ENCODE measurements at regions of chr20 and their contacts with region 1.

Region 1: DNA sequence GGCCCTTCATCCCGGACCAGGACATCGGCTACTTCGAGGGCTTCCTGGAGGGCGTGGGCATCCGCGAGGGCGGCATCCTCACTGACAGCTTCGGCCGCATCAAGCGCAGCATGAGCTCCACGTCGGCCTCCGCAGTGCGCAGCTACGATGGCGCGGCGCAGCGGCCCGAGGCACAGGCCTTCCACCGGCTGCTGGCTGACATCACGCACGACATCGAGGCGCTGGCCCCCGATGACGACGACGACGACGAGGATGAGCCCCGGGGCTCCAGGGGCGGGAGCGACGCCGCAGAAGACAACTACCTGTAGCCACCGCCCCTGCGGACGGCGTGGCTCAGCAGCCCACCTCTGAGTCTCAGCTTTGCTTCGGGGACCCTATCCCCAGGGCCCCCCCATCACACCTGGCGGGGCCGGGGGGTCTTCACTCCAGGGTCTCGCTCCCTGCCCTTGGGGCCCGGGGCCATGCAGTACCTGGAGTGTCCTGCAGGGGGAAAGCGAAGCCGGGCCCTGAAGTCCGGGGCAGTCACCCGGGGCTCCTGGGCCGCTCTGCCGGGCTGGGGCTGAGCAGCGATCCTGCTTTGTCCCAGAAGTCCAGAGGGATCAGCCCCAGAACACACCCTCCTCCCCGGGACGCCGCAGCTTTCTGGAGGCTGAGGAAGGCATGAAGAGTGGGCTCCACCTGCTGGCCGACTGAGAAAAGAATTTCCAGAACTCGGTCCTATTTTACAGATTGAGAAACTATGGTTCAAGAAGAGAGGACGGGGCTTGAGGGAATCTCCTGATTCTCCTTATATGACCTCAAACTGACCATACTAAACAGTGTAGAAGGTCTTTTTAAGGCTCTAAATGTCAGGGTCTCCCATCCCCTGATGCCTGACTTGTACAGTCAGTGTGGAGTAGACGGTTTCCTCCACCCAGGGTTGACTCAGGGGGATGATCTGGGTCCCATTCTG is 20.8 kb upstream of the HCK start:
- DNase-seq: peak; percentile 86 to 89
- ATAC-seq: peak; percentile 90 to 99
- H3K4me3 ChIP-seq: peak overlapping the region; percentile 24
- H3K27ac ChIP-seq: peak overlapping the region in 1 of 2 experiments; percentile 64; a peak in 4 of 6 replicates
- H3K4me1 ChIP-seq: no peaks in the 10 kb centered on the region; the same call in 1 of the 3 replicates
- CTCF ChIP-seq: peak; percentile 99
- EP300 ChIP-seq: no peak
- POLR2A ChIP-seq: no peak
- RAD21 ChIP-seq: peak; percentile 88 to 90

Region 2: GRCh38 chr20:31822421-31823330 is 208.6 kb before region 1 on chr20:
- CTCF ChIA-PET with region 1: interaction called, 117 read pairs
- POLR2A ChIA-PET with region 1: no interaction called
- DNase-seq: peak; percentile 62 to 79
- ATAC-seq: peak; percentile 71 to 90
- H3K4me3 ChIP-seq: 0 out of 3 replicates have a peak overlapping the region, but pooled peaks have one; percentile 18
- H3K27ac ChIP-seq: peak overlapping the region; percentile 16 to 68; a peak in 4 of 6 replicates
- H3K4me1 ChIP-seq: peaks cover 23% of the 10 kb centered on the region; the same call in 2 of the 3 replicates
- CTCF ChIP-seq: peak; percentile 97
- EP300 ChIP-seq: no peak
- POLR2A ChIP-seq: no peak
- RAD21 ChIP-seq: peak; percentile 97 to 99

Region 3: DNA sequence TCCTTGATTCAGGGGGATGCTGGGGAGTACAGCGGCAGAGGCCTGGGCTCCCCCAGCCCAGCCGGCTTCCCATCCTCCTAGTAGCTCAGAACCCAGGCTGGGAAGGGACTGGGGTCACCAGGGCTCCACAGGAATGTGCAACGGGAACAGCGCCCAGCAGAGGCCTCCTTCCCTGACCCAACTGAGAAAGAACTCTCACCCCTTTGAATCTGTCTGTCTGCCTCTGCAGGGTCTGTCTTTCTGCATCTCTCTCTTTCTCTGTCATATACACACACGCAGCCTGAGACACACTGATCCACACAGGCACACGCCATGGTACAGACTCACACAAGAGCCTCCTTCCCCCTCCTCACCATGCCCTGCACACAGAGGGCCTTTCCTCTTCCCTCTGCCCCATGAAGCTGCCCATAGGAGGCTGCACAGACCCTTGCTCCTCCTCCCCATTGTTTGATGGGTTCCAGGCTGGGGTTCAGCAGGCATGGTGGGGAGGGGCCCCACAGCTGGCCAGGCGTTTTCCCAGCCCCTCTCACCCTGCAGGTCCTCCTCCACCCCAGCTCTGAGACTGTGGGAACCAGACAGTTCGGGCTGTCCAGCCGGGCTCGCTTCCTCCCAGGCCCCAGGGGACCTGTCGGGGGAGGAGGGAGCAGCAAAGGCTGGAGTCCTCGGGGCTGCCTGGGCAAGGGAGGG is 188.7 kb before region 1 on chr20:
- CTCF ChIA-PET with region 1: interaction called, 21 read pairs
- POLR2A ChIA-PET with region 1: no interaction called
- DNase-seq: peak in 1 of 2 experiments; percentile 45
- ATAC-seq: peak; percentile 22 to 44; a peak in 4 of 6 replicates
- H3K4me3 ChIP-seq: no peak overlapping the region
- H3K27ac ChIP-seq: peak overlapping the region; percentile 85 to 86
- H3K4me1 ChIP-seq: peaks cover 84% of the 10 kb centered on the region
- CTCF ChIP-seq: no peak
- EP300 ChIP-seq: no peak
- POLR2A ChIP-seq: no peak
- RAD21 ChIP-seq: no peak

Region 4: GRCh38 chr20:31879143-31879987 is 151.9 kb before region 1 on chr20:
- CTCF ChIA-PET with region 1: interaction called, 14 read pairs
- POLR2A ChIA-PET with region 1: no interaction called
- DNase-seq: peak; percentile 98
- ATAC-seq: peak; percentile 100
- H3K4me3 ChIP-seq: peak overlapping the region; percentile 61
- H3K27ac ChIP-seq: peak overlapping the region; percentile 70 to 85
- H3K4me1 ChIP-seq: no peaks in the 10 kb centered on the region
- CTCF ChIP-seq: no peak
- EP300 ChIP-seq: no peak
- POLR2A ChIP-seq: peak; percentile 88
- RAD21 ChIP-seq: no peak

Region 5: DNA sequence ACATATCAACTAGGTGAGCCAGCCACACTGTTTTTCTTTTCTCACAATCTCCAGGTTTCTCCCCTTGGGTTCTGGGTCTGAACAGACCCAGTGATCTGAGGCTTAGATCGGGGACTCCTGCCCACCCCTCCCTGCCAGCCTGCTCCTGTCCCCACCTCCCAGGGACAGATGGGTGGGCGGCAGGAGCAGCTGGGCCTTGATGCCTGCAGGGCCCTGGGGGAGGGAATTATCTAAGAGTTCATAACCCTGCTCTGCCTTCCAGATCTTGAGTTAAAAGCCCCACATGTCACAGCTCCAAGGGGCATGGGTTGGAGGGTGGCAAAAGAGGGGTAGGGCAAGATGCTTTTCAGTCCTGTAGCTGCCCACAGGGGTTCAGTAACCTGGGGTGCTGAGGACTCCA is 68.5 kb before region 1 on chr20:
- CTCF ChIA-PET with region 1: interaction called, 15 read pairs
- POLR2A ChIA-PET with region 1: no interaction called
- DNase-seq: no peak
- ATAC-seq: no peak
- H3K4me3 ChIP-seq: no peak overlapping the region
- H3K27ac ChIP-seq: no peak overlapping the region
- H3K4me1 ChIP-seq: peaks cover under 1% of the 10 kb centered on the region; the same call in 1 of the 3 replicates
- CTCF ChIP-seq: no peak
- EP300 ChIP-seq: no peak
- POLR2A ChIP-seq: no peak
- RAD21 ChIP-seq: no peak

Region 6: DNA sequence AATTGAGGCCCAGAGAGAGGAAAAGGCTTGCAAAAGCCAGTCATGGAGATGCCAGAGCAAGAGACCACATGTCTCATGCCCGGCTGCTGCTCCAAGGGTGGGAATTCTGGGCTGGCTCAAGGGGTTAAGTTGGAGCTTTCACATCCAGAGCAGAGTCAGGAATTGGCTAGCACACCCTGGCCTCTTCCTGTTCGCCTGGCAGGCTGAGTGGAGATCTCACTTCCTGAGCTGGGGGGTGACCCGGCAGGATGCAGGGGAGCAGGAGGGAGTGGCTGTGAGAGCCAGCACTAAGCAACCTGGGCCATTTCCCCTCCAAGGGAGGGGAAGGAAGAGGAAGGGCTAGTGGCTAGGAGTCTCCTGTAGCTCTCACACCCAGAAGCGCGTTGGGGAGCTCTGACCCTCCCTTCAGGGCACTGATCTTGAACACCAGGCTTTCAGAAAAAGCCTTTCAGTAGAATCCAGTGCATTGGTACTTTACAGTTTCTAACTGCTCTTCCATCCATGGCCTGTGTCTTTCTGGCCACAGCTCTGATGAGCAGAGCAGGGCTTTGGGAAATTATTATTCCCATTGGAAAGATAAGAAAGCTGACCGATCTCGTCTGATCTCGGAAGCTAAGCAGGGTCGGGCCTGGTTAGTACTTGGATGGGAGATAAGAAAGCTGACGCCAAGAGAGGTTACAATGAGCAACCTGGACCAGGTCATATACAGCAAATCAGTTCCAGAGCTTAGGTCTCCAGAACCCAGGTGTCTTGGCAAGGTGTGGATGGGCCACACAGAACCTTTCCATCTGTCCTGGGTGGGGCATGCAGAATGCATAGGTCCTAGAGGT is 23.3 kb before region 1 on chr20:
- CTCF ChIA-PET with region 1: interaction called, 18 read pairs
- POLR2A ChIA-PET with region 1: no interaction called
- DNase-seq: no peak
- ATAC-seq: no peak
- H3K4me3 ChIP-seq: no peak overlapping the region
- H3K27ac ChIP-seq: no peak overlapping the region
- H3K4me1 ChIP-seq: no peaks in the 10 kb centered on the region
- CTCF ChIP-seq: no peak
- EP300 ChIP-seq: no peak
- POLR2A ChIP-seq: no peak
- RAD21 ChIP-seq: no peak

Region 7: GRCh38 chr20:32077190-32077589 is 45.9 kb after region 1 on chr20:
- CTCF ChIA-PET with region 1: interaction called, 18 read pairs
- POLR2A ChIA-PET with region 1: no interaction called
- DNase-seq: no peak
- ATAC-seq: no peak
- H3K4me3 ChIP-seq: no peak overlapping the region
- H3K27ac ChIP-seq: no peak overlapping the region
- H3K4me1 ChIP-seq: no peaks in the 10 kb centered on the region
- CTCF ChIP-seq: no peak
- EP300 ChIP-seq: no peak
- POLR2A ChIP-seq: no peak
- RAD21 ChIP-seq: no peak

Region 8: DNA sequence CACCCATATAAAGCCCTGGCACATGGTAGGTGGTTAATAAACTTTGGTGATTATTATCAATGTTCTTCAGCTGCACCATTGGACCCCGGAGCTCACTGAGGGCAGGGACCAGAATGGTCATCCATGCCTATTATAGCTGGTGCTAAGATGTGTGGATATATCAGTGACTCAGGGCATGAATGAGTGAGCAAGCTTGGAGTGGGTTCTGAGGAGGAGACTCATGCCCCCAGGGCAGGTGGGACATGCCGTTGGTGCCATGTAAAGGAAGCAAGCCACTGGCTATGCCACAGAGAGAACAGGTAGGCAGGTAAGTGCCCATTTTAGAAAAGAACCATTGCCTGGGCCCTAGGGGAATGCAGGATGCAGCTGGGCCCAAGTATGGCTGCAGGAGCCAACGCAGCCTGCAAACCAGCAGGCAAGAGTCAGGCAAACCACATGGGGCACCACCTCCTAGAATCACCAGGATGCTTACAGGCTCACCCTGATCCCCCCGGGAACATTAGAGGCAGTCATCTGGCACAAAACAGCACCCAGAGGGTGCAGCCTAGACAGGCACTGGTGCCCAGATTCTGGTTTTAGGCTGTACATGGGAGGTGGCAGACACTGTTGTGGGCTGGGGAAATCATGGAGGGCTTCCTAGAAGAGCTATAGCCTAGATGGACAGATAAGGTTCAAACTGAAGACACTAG is 152.8 kb after region 1 on chr20:
- CTCF ChIA-PET with region 1: no interaction called
- POLR2A ChIA-PET with region 1: no interaction called
- DNase-seq: no peak
- ATAC-seq: no peak
- H3K4me3 ChIP-seq: no peak overlapping the region
- H3K27ac ChIP-seq: no peak overlapping the region
- H3K4me1 ChIP-seq: no peaks in the 10 kb centered on the region
- CTCF ChIP-seq: no peak
- EP300 ChIP-seq: no peak
- POLR2A ChIP-seq: no peak
- RAD21 ChIP-seq: no peak

Region 9: DNA sequence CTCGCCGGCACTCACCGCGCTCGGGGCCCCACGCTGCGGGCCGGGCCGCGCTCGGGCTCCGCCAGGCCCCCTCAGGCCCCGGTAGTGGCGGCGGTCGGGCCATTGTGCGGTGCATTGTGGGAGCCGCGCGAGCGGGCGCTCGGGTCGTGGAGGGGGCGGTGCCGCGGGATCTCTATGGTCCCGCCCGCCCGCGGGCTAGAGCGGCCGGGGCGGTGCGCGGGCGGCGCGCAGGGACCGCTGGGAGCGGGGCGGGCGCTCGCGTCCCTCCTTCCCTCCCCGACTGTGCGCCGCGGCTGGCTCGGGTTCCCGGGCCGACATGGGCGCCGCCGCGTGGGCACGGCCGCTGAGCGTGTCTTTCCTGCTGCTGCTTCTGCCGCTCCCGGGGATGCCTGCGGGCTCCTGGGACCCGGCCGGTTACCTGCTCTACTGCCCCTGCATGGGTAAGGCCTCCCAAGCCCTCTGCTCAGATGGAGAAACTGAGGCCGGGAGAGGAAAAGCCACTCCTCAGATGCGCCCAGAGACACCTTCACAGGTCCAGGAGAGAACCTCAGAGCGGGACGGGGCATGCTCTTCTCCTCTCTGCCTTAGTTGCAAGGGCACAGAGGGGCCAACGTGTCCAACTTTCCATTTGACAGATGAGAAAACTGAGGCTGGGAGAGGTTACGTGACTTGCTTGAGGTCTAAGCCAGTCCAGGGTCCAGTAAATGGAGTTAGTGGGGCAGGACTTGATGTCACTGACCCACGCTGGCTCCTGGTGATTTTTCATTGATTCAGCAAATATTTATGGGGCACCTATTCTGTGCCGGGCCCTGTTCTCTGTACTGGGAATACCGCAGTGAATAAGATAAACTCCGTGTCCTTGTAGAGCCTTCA is 176.6 kb after region 1 on chr20 and contains the starts of genes PLAGL2 and POFUT1:
- CTCF ChIA-PET with region 1: no interaction called
- POLR2A ChIA-PET with region 1: no interaction called
- DNase-seq: peak; percentile 85 to 96
- ATAC-seq: peak; percentile 94 to 99
- H3K4me3 ChIP-seq: peak within 1 kb of the TSS; percentile 92
- H3K27ac ChIP-seq: peak within 1 kb of the TSS; percentile 98 to 100
- H3K4me1 ChIP-seq: peaks cover 30% of the 10 kb centered on the region
- CTCF ChIP-seq: 0 out of 3 replicates have a peak, but pooled peaks have one; percentile 20
- EP300 ChIP-seq: no peak
- POLR2A ChIP-seq: peak; percentile 84
- RAD21 ChIP-seq: 0 out of 5 replicates have a peak, but pooled peaks of 1 of the 2 experiments have one; percentile 18
- polyA plus RNA-seq, gene PLAGL2: 6.1 and 12.0 TPM in 2 replicates
- polyA plus RNA-seq, gene POFUT1: 43.9 and 49.4 TPM in 2 replicates

Measured in A549 (cell line).